ENCODE measurements at regions of chr20 and their contacts with region 1.

Region 1: GRCh38 chr20:34312544-34313217 is 9.5 kb upstream of the AHCY start:
- DNase-seq: peak; percentile 65
- ATAC-seq: peak; percentile 100
- H3K4me3 ChIP-seq: no peak overlapping the region
- H3K27ac ChIP-seq: no peak overlapping the region
- H3K4me1 ChIP-seq: peaks cover 8% of the 10 kb centered on the region; the same call in 1 of the 2 replicates
- H3K27me3 ChIP-seq: peaks cover 0 to 9% of the 10 kb centered on the region in 2 experiments; a peak in 1 of 4 replicates
- CTCF ChIP-seq: peak; percentile 100; a peak in 5 of 6 replicates
- EP300 ChIP-seq: no peak
- POLR2A ChIP-seq: no peak
- RAD21 ChIP-seq: peak; percentile 100

Region 2: GRCh38 chr20:34150306-34151000 is 162.2 kb before region 1 on chr20:
- CTCF ChIA-PET with region 1: no interaction called
- POLR2A ChIA-PET with region 1: no interaction called
- RAD21 ChIA-PET with region 1: no interaction called
- SMC1A ChIA-PET with region 1: no interaction called
- in situ Hi-C with region 1: no loop called
- intact Hi-C with region 1: no loop called
- DNase-seq: no peak
- ATAC-seq: no peak
- H3K4me3 ChIP-seq: no peak overlapping the region
- H3K27ac ChIP-seq: no peak overlapping the region
- H3K4me1 ChIP-seq: no peaks in the 10 kb centered on the region
- H3K27me3 ChIP-seq: no peaks in the 10 kb centered on the region
- CTCF ChIP-seq: no peak
- EP300 ChIP-seq: no peak
- POLR2A ChIP-seq: no peak
- RAD21 ChIP-seq: no peak

Region 3: GRCh38 chr20:34282041-34282440 is 30.6 kb before region 1 on chr20:
- CTCF ChIA-PET with region 1: no interaction called
- POLR2A ChIA-PET with region 1: no interaction called
- RAD21 ChIA-PET with region 1: no interaction called
- SMC1A ChIA-PET with region 1: no interaction called
- in situ Hi-C with region 1: no loop called
- intact Hi-C with region 1: no loop called
- DNase-seq: no peak
- ATAC-seq: no peak
- H3K4me3 ChIP-seq: no peak overlapping the region
- H3K27ac ChIP-seq: no peak overlapping the region
- H3K4me1 ChIP-seq: no peaks in the 10 kb centered on the region
- H3K27me3 ChIP-seq: no peaks in the 10 kb centered on the region
- CTCF ChIP-seq: no peak
- EP300 ChIP-seq: no peak
- POLR2A ChIP-seq: no peak
- RAD21 ChIP-seq: no peak

Region 4: GRCh38 chr20:34363062-34363464 is 50.4 kb after region 1 on chr20 and contains the start of gene ITCH:
- CTCF ChIA-PET with region 1: interaction called, 24 read pairs
- POLR2A ChIA-PET with region 1: interaction called, 4 read pairs
- RAD21 ChIA-PET with region 1: interaction called, 18 read pairs
- SMC1A ChIA-PET with region 1: interaction called, 3 read pairs
- in situ Hi-C with region 1: no loop called
- intact Hi-C with region 1: no loop called
- DNase-seq: peak; percentile 56
- ATAC-seq: peak; percentile 98
- H3K4me3 ChIP-seq: peak within 1 kb of the TSS; percentile 99
- H3K27ac ChIP-seq: peak within 1 kb of the TSS; percentile 70
- H3K4me1 ChIP-seq: peaks cover 20% of the 10 kb centered on the region
- H3K27me3 ChIP-seq: no peaks in the 10 kb centered on the region
- CTCF ChIP-seq: no peak
- EP300 ChIP-seq: no peak
- POLR2A ChIP-seq: peak; percentile 92
- RAD21 ChIP-seq: no peak
- polyA plus RNA-seq, gene ITCH: 7.5 to 8.2 TPM

Region 5: DNA sequence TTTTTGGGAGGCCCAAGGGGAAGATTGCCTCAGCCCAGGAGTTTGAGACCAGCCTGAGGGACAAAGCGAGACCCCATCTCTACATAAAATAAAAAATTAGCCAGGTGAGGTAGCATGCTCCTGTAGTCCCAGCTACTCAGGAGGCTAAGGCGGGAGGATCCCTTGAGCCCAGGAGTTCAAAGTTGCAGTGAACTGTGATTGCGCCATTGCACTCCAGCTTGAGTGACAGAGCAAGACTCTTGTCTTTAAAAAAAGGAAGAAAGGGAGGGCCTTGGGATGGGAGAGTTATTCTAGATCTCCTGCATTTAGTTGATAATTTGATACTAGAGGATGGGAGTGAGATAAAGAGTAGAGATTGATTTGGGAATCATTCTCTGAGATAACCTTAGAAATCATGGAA is 118.5 kb after region 1 on chr20:
- CTCF ChIA-PET with region 1: interaction called, 30 read pairs
- POLR2A ChIA-PET with region 1: no interaction called
- RAD21 ChIA-PET with region 1: interaction called, 12 read pairs
- SMC1A ChIA-PET with region 1: interaction called, 14 read pairs
- in situ Hi-C with region 1: no loop called
- intact Hi-C with region 1: no loop called
- DNase-seq: no peak
- ATAC-seq: no peak
- H3K4me3 ChIP-seq: no peak overlapping the region
- H3K27ac ChIP-seq: no peak overlapping the region
- H3K4me1 ChIP-seq: no peaks in the 10 kb centered on the region
- H3K27me3 ChIP-seq: no peaks in the 10 kb centered on the region
- CTCF ChIP-seq: no peak
- EP300 ChIP-seq: no peak
- POLR2A ChIP-seq: no peak
- RAD21 ChIP-seq: no peak

Region 6: GRCh38 chr20:34465286-34465685 is 152.6 kb after region 1 on chr20:
- CTCF ChIA-PET with region 1: interaction called, 24 read pairs
- POLR2A ChIA-PET with region 1: no interaction called
- RAD21 ChIA-PET with region 1: interaction called, 10 read pairs
- SMC1A ChIA-PET with region 1: interaction called, 13 read pairs
- in situ Hi-C with region 1: no loop called
- intact Hi-C with region 1: no loop called
- DNase-seq: no peak
- ATAC-seq: no peak
- H3K4me3 ChIP-seq: no peak overlapping the region
- H3K27ac ChIP-seq: no peak overlapping the region
- H3K4me1 ChIP-seq: no peaks in the 10 kb centered on the region
- H3K27me3 ChIP-seq: no peaks in the 10 kb centered on the region
- CTCF ChIP-seq: no peak
- EP300 ChIP-seq: no peak
- POLR2A ChIP-seq: no peak
- RAD21 ChIP-seq: no peak

Region 7: GRCh38 chr20:34522969-34523871 is 210.5 kb after region 1 on chr20:
- CTCF ChIA-PET with region 1: interaction called, 61 read pairs
- POLR2A ChIA-PET with region 1: no interaction called
- RAD21 ChIA-PET with region 1: interaction called, 45 read pairs
- SMC1A ChIA-PET with region 1: interaction called, 35 read pairs
- in situ Hi-C with region 1: loop called (anchors 5 kb)
- intact Hi-C with region 1: loop called (anchors 1 kb)
- DNase-seq: no peak
- ATAC-seq: peak; percentile 91
- H3K4me3 ChIP-seq: no peak overlapping the region
- H3K27ac ChIP-seq: no peak overlapping the region
- H3K4me1 ChIP-seq: peaks cover 11% of the 10 kb centered on the region
- H3K27me3 ChIP-seq: no peaks in the 10 kb centered on the region
- CTCF ChIP-seq: peak; percentile 63 to 75 (median 66)
- EP300 ChIP-seq: no peak
- POLR2A ChIP-seq: no peak
- RAD21 ChIP-seq: peak; percentile 69

Region 8: GRCh38 chr20:34704177-34705007 is 391.7 kb after region 1 on chr20 and contains the start of gene TP53INP2:
- CTCF ChIA-PET with region 1: interaction called, 60 read pairs
- POLR2A ChIA-PET with region 1: interaction called, 3 read pairs
- RAD21 ChIA-PET with region 1: interaction called, 36 read pairs
- SMC1A ChIA-PET with region 1: interaction called, 26 read pairs
- in situ Hi-C with region 1: no loop called
- intact Hi-C with region 1: loop called (anchors 5 kb)
- DNase-seq: no peak
- ATAC-seq: peak; percentile 66
- H3K4me3 ChIP-seq: peak within 1 kb of the TSS; percentile 96
- H3K27ac ChIP-seq: peak within 1 kb of the TSS; percentile 70
- H3K4me1 ChIP-seq: peaks cover 3% of the 10 kb centered on the region; the same call in 1 of the 2 replicates
- H3K27me3 ChIP-seq: no peaks in the 10 kb centered on the region
- CTCF ChIP-seq: no peak
- EP300 ChIP-seq: no peak
- POLR2A ChIP-seq: peak; percentile 66
- RAD21 ChIP-seq: no peak
- polyA plus RNA-seq, gene TP53INP2: 2.8 to 3.7 TPM